Naive thymus-derived CD4-positive, alpha-beta T cell (primary cell): ENCODE measurements at regions of chr14 and their contacts with region 1.

Region 1: GRCh38 chr14:81220830-81221578 is at the start of gene GTF2A1:
- DNase-seq: peak; percentile 92 to 96 (median 94)
- ATAC-seq: peak; percentile 84
- H3K4me3 ChIP-seq: peak within 1 kb of the TSS; percentile 94
- H3K4me3 Mint-ChIP-seq: peak within 1 kb of the TSS; percentile 92 to 100 (median 99)
- H3K27ac ChIP-seq: peak within 1 kb of the TSS; percentile 97
- H3K27ac Mint-ChIP-seq: peak within 1 kb of the TSS; percentile 98 to 100 (median 100)
- H3K4me1 ChIP-seq: peaks cover 22 to 28% of the 10 kb centered on the region in 2 donors
- H3K4me1 Mint-ChIP-seq: peaks cover 16 to 47% (median 33%) of the 10 kb centered on the region in 7 donors
- H3K27me3 ChIP-seq: no peaks in the 10 kb centered on the region
- H3K27me3 Mint-ChIP-seq: peaks cover 0 to 11% (median 0%) of the 10 kb centered on the region in 5 donors
- total RNA-seq, gene GTF2A1: 21.5 to 39.2 (median 33.7) TPM

Region 2: GRCh38 chr14:80923368-80923767 is 297.6 kb before region 1 on chr14:
- CTCF ChIA-PET with region 1: no interaction called
- POLR2A ChIA-PET with region 1: no interaction called
- intact Hi-C with region 1: no loop called
- DNase-seq: no peak
- ATAC-seq: no peak
- H3K4me3 ChIP-seq: no peak overlapping the region
- H3K4me3 Mint-ChIP-seq: no peak overlapping the region
- H3K27ac ChIP-seq: no peak overlapping the region
- H3K27ac Mint-ChIP-seq: no peak overlapping the region
- H3K4me1 ChIP-seq: no peaks in the 10 kb centered on the region
- H3K4me1 Mint-ChIP-seq: peaks cover 0 to 29% (median 0%) of the 10 kb centered on the region in 7 donors
- H3K27me3 ChIP-seq: no peaks in the 10 kb centered on the region
- H3K27me3 Mint-ChIP-seq: peaks cover 0 to 4% (median 0%) of the 10 kb centered on the region in 5 donors

Region 3: GRCh38 chr14:81113176-81113575 is 107.8 kb before region 1 on chr14:
- CTCF ChIA-PET with region 1: no interaction called
- POLR2A ChIA-PET with region 1: no interaction called
- intact Hi-C with region 1: no loop called
- DNase-seq: no peak
- ATAC-seq: no peak
- H3K4me3 ChIP-seq: no peak overlapping the region
- H3K4me3 Mint-ChIP-seq: no peak overlapping the region
- H3K27ac ChIP-seq: no peak overlapping the region
- H3K27ac Mint-ChIP-seq: no peak overlapping the region
- H3K4me1 ChIP-seq: no peaks in the 10 kb centered on the region
- H3K4me1 Mint-ChIP-seq: no peaks in the 10 kb centered on the region
- H3K27me3 ChIP-seq: no peaks in the 10 kb centered on the region
- H3K27me3 Mint-ChIP-seq: peaks cover 0 to 13% (median 0%) of the 10 kb centered on the region in 5 donors

Region 4: GRCh38 chr14:81193924-81194633 is 26.9 kb before region 1 on chr14:
- CTCF ChIA-PET with region 1: interaction called, 3 read pairs
- POLR2A ChIA-PET with region 1: interaction called, 6 read pairs
- intact Hi-C with region 1: loop called (anchors 1 to 2 kb)
- DNase-seq: no peak
- ATAC-seq: no peak
- H3K4me3 ChIP-seq: no peak overlapping the region
- H3K4me3 Mint-ChIP-seq: peak overlapping the region in 1 of 10 donors; percentile 29
- H3K27ac ChIP-seq: no peak overlapping the region
- H3K27ac Mint-ChIP-seq: peak overlapping the region in 6 of 9 donors; percentile 15 to 83 (median 52)
- H3K4me1 ChIP-seq: peaks cover 16 to 17% of the 10 kb centered on the region in 2 donors
- H3K4me1 Mint-ChIP-seq: peaks cover 24 to 71% (median 41%) of the 10 kb centered on the region in 7 donors
- H3K27me3 ChIP-seq: no peaks in the 10 kb centered on the region
- H3K27me3 Mint-ChIP-seq: no peaks in the 10 kb centered on the region

Region 5: DNA sequence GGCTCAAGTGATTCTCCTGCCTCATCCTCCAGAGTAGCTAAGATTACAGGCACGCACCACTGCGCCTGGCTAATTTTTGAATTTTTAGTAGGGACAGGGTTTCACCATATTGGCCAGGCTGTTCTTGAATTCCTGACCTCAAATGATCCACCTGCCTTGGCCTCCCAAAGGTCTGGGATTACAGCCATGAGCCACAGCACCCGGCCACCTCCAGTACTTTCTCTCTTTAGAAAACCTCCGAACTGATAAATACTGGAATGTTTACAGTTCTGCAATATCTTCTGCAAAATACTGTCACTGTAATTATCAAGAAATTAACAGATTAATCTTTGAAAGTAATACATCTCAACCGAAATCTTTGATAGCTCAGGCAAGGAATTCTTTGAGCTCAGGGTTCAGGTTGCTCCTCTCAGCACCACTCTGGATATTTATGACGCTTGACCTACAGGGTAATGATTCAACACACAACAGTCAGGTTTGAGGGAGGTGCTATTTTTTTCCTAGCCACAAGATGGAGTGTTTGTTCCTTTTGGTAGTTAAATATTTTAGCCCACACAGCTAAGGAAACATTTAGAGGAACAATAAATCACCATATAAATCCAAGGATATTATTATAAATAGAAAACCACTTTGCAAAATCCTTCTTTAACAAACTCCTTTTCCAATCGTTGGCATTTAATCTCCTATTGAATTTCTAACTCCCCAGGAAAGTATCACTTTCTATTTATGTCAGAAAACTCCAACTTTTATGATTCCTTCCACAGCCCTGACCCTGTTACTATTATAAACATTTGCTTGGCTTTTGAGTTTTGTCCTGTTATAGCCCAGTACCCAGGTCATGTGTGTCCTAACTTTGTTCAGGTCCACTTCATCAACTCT is 48.3 kb after region 1 on chr14:
- CTCF ChIA-PET with region 1: no interaction called
- POLR2A ChIA-PET with region 1: interaction called, 4 read pairs
- intact Hi-C with region 1: loop called in 1 of 2 experiments (anchors 2 kb)
- DNase-seq: peak in 7 of 9 donors; percentile 14 to 45 (median 27)
- ATAC-seq: peak; percentile 82
- H3K4me3 ChIP-seq: no peak overlapping the region
- H3K4me3 Mint-ChIP-seq: no peak overlapping the region
- H3K27ac ChIP-seq: no peak overlapping the region
- H3K27ac Mint-ChIP-seq: no peak overlapping the region
- H3K4me1 ChIP-seq: no peaks in the 10 kb centered on the region
- H3K4me1 Mint-ChIP-seq: peaks cover 0 to 21% (median 6%) of the 10 kb centered on the region in 7 donors
- H3K27me3 ChIP-seq: no peaks in the 10 kb centered on the region
- H3K27me3 Mint-ChIP-seq: peaks cover 12 to 26% (median 17%) of the 10 kb centered on the region in 5 donors

Region 6: GRCh38 chr14:81287016-81287776 is 66.2 kb after region 1 on chr14:
- CTCF ChIA-PET with region 1: no interaction called
- POLR2A ChIA-PET with region 1: no interaction called
- intact Hi-C with region 1: no loop called
- DNase-seq: no peak
- ATAC-seq: no peak
- H3K4me3 ChIP-seq: no peak overlapping the region
- H3K4me3 Mint-ChIP-seq: no peak overlapping the region
- H3K27ac ChIP-seq: no peak overlapping the region
- H3K27ac Mint-ChIP-seq: no peak overlapping the region
- H3K4me1 ChIP-seq: no peaks in the 10 kb centered on the region
- H3K4me1 Mint-ChIP-seq: no peaks in the 10 kb centered on the region
- H3K27me3 ChIP-seq: no peaks in the 10 kb centered on the region
- H3K27me3 Mint-ChIP-seq: peaks cover 0 to 11% (median 7%) of the 10 kb centered on the region in 5 donors

Region 7: DNA sequence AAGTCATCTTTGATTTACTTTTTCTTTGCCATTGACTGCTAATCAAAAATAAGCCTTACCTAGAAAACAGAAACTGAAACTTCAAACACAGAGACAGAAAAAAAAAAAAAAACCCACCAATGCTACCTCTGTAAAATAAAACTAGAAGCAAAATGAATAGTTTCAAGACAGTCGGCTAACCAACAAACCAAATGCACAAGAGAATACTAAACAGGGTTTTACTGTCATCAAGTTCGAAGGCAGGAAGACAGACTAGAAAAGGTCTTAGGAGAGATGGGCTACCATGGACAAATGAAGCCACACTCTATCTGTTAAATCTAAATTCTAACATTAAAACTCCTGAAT is 253.1 kb after region 1 on chr14:
- CTCF ChIA-PET with region 1: no interaction called
- POLR2A ChIA-PET with region 1: no interaction called
- intact Hi-C with region 1: loop called in 1 of 2 experiments (anchors 1 kb)
- DNase-seq: peak in 5 of 9 donors; percentile 10 to 25 (median 18)
- ATAC-seq: peak; percentile 54
- H3K4me3 ChIP-seq: peak overlapping the region; percentile 4
- H3K4me3 Mint-ChIP-seq: peak overlapping the region in 9 of 10 donors; percentile 59 to 89 (median 75)
- H3K27ac ChIP-seq: peak overlapping the region; percentile 68
- H3K27ac Mint-ChIP-seq: peak overlapping the region; percentile 84 to 97 (median 91)
- H3K4me1 ChIP-seq: peaks cover 9 to 14% of the 10 kb centered on the region in 2 donors
- H3K4me1 Mint-ChIP-seq: peaks cover 19 to 58% (median 38%) of the 10 kb centered on the region in 7 donors
- H3K27me3 ChIP-seq: no peaks in the 10 kb centered on the region
- H3K27me3 Mint-ChIP-seq: no peaks in the 10 kb centered on the region

Region 8: GRCh38 chr14:81618695-81619094 is 397.7 kb after region 1 on chr14:
- CTCF ChIA-PET with region 1: no interaction called
- POLR2A ChIA-PET with region 1: no interaction called
- intact Hi-C with region 1: no loop called
- DNase-seq: no peak
- ATAC-seq: no peak
- H3K4me3 ChIP-seq: no peak overlapping the region
- H3K4me3 Mint-ChIP-seq: no peak overlapping the region
- H3K27ac ChIP-seq: no peak overlapping the region
- H3K27ac Mint-ChIP-seq: no peak overlapping the region
- H3K4me1 ChIP-seq: no peaks in the 10 kb centered on the region
- H3K4me1 Mint-ChIP-seq: no peaks in the 10 kb centered on the region
- H3K27me3 ChIP-seq: no peaks in the 10 kb centered on the region
- H3K27me3 Mint-ChIP-seq: peaks cover 0 to 16% (median 2%) of the 10 kb centered on the region in 5 donors